SK-N-SH (cell line): ENCODE measurements at regions of chr17 and their contacts with region 1.

Region 1: DNA sequence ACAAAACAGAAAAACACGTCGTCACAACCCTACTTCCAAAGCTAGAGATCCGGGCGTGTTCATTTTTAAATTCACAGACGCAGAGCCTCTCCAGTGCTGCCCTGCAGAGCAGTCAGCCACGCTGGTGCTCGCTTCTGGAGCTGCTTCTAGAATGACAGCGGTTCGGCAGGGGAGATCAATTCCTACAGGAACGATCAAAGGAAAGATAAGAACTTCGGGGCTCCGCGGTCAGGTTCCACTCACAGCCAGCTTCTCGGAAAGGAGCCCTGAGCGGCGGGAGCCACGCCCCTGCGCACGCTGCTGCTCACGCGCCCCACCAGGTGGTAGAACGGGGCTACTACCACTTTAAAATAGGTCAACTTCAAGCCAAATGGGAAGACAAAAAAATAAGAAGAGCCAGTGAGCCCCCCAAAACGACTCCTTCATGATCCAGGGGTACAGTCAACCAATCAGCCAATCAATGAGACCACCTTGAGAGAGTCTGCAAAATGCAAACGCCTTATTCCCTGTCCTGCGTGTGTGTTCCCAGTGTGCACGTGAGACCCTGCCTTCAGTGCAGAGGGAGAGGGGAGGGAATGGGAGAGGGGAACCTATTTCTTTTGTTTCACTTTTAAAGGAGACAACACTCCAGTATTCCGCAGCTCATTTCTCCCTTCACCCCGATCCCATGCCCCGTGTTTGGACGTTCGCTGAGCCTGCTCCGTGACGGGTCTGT is 209.7 kb downstream of the RBFOX3 start:
- DNase-seq: peak; percentile 94
- H3K4me3 ChIP-seq: peak overlapping the region; percentile 34 to 55
- H3K27ac ChIP-seq: no peak overlapping the region
- H3K4me1 ChIP-seq: peaks cover 0 to 8% of the 10 kb centered on the region in 2 experiments; a peak in 1 of 4 replicates
- H3K27me3 ChIP-seq: peaks cover 55% of the 10 kb centered on the region
- CTCF ChIP-seq: peak; percentile 97
- EP300 ChIP-seq: no peak
- RAD21 ChIP-seq: peak; percentile 67

Region 2: DNA sequence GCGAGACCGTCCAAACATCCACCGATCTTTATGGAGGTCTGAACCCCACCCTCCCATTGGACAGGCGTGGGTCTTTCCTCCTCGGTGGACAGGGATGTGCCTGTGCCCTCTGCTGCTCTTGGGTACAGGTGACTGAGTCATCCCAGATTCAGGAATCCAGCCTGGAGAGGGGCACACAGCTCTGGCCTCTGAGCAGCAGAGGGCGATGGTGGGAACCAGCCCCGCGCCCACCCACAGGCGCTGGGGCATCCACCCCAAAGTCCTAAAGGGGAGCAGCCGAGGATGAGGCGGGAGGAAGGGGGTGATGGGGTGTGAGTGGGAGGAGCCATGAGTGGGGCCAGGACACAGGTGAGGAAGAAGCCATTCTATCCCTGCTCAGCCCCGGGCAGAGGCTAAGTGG is 291.6 kb before region 1 on chr17:
- CTCF ChIA-PET with region 1: interaction called, 1,305 read pairs
- POLR2A ChIA-PET with region 1: no interaction called
- DNase-seq: peak; percentile 79
- H3K4me3 ChIP-seq: no peak overlapping the region
- H3K27ac ChIP-seq: no peak overlapping the region
- H3K4me1 ChIP-seq: peaks cover 0 to 15% of the 10 kb centered on the region in 2 experiments; a peak in 1 of 4 replicates
- H3K27me3 ChIP-seq: peaks cover 17% of the 10 kb centered on the region; the same call in 1 of the 2 replicates
- CTCF ChIP-seq: peak; percentile 48
- EP300 ChIP-seq: no peak
- RAD21 ChIP-seq: peak; percentile 51

Region 3: DNA sequence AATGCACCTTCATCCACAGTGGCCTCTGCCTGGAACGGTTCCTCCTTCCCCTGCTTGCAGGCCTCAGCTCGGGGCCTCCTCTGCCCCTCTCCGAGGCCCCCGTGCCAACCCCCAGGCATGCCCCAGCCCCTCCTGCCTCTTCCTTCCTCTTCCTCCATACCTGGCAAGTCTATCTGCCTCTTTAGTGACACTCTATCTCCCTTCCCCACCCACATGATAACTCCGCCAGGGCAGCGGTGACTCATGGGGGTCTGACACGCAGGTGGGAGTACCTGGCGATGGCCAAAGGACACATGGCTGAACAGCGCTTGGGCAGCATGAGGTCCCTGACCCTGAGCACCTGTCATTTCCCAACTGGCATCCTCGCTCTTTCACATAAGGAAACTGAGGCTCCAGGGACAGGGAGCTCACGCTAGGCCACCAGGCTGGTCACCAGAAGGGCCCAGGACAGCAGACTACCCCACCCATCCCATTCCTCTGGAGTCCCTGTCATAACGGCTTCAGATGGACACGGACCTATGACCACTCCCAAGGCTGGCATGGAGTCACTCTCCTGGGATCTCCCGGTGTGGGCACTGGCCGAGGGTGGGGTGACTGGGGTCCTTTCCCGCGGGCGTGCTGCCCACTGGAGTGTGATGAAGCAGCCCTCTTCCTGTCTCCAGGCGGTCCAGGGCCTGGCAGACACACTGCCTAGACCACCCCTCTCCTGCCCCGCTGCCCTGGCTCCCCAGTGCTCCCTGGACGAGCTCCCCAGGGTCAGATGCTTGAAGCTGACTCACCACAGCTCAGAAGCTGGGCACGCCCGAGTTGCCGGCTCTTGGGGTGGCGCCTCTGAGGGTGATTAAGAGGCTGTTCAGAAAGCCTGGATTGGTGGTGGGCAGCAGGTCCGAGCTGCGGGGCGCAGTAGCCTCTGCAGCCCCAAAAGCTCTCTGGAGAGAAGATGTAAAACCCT is 226.0 kb before region 1 on chr17:
- CTCF ChIA-PET with region 1: interaction called, 571 read pairs
- POLR2A ChIA-PET with region 1: no interaction called
- DNase-seq: no peak
- H3K4me3 ChIP-seq: no peak overlapping the region
- H3K27ac ChIP-seq: no peak overlapping the region
- H3K4me1 ChIP-seq: peaks cover 0 to 6% of the 10 kb centered on the region in 2 experiments; a peak in 1 of 4 replicates
- H3K27me3 ChIP-seq: peaks cover 41% of the 10 kb centered on the region
- CTCF ChIP-seq: no peak
- EP300 ChIP-seq: no peak
- RAD21 ChIP-seq: no peak

Region 4: GRCh38 chr17:79420318-79421243 is 19.4 kb after region 1 on chr17:
- CTCF ChIA-PET with region 1: interaction called, 96 read pairs
- POLR2A ChIA-PET with region 1: no interaction called
- DNase-seq: no peak
- H3K4me3 ChIP-seq: no peak overlapping the region
- H3K27ac ChIP-seq: no peak overlapping the region
- H3K4me1 ChIP-seq: no peaks in the 10 kb centered on the region; a peak in 1 of 4 replicates
- H3K27me3 ChIP-seq: 0 out of 2 replicates have a peak, but pooled peaks cover 29% of the 10 kb centered on the region
- CTCF ChIP-seq: no peak
- EP300 ChIP-seq: no peak
- RAD21 ChIP-seq: no peak

Region 5: GRCh38 chr17:79497777-79498348 is 96.7 kb after region 1 on chr17:
- CTCF ChIA-PET with region 1: no interaction called
- POLR2A ChIA-PET with region 1: no interaction called
- DNase-seq: no peak
- H3K4me3 ChIP-seq: no peak overlapping the region
- H3K27ac ChIP-seq: no peak overlapping the region
- H3K4me1 ChIP-seq: peaks cover 0 to 6% of the 10 kb centered on the region in 2 experiments; a peak in 1 of 4 replicates
- H3K27me3 ChIP-seq: no peaks in the 10 kb centered on the region
- CTCF ChIP-seq: no peak
- EP300 ChIP-seq: no peak
- RAD21 ChIP-seq: no peak

Region 6: GRCh38 chr17:79707931-79708891 is 307.1 kb after region 1 on chr17:
- CTCF ChIA-PET with region 1: interaction called, 93 read pairs
- POLR2A ChIA-PET with region 1: no interaction called
- DNase-seq: peak; percentile 89
- H3K4me3 ChIP-seq: no peak overlapping the region
- H3K27ac ChIP-seq: no peak overlapping the region
- H3K4me1 ChIP-seq: no peaks in the 10 kb centered on the region
- H3K27me3 ChIP-seq: no peaks in the 10 kb centered on the region
- CTCF ChIP-seq: peak; percentile 83
- EP300 ChIP-seq: no peak
- RAD21 ChIP-seq: peak; percentile 92